ENCODE measurements at regions of chr2 and their contacts with region 1.

Region 1: GRCh38 chr2:28269019-28269784 is 123.5 kb upstream of the FOSL2 start:
- DNase-seq: peak; percentile 70
- H3K4me3 Mint-ChIP-seq: peak overlapping the region; percentile 60
- H3K27ac Mint-ChIP-seq: peak overlapping the region; percentile 90
- H3K4me1 Mint-ChIP-seq: peaks cover 45% of the 10 kb centered on the region
- H3K27me3 Mint-ChIP-seq: no peaks in the 10 kb centered on the region
- CTCF ChIP-seq: no peak

Region 2: DNA sequence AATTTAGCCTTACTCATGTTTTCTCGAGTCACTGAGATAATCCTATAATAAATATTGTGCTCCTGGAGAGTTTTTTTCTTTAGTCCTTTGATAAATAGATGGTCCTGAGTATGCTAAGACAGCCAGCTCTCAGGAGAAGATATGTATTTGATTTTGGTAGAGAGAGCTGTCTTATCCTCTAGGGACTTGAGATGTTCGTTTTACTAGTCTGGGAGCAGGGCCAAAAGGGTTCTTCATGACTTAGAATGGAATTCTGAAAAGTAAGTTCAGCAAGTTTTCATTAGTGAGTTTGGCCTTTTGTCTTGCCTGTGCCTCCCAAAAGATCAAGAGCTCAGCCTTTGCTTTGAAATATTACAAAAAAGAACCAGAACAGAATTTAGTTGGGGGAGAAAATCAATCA is 132.0 kb before region 1 on chr2:
- CTCF ChIA-PET with region 1: no interaction called
- POLR2A ChIA-PET with region 1: interaction called, 15 read pairs
- intact Hi-C with region 1: no loop called
- DNase-seq: peak; percentile 70
- H3K4me3 Mint-ChIP-seq: peak overlapping the region; percentile 16
- H3K27ac Mint-ChIP-seq: peak overlapping the region; percentile 57
- H3K4me1 Mint-ChIP-seq: peaks cover 46% of the 10 kb centered on the region
- H3K27me3 Mint-ChIP-seq: no peaks in the 10 kb centered on the region
- CTCF ChIP-seq: no peak

Region 3: GRCh38 chr2:28160986-28161425 is 108.2 kb before region 1 on chr2:
- CTCF ChIA-PET with region 1: interaction called, 5 read pairs
- POLR2A ChIA-PET with region 1: interaction called, 20 read pairs
- intact Hi-C with region 1: no loop called
- DNase-seq: peak; percentile 82
- H3K4me3 Mint-ChIP-seq: no peak overlapping the region
- H3K27ac Mint-ChIP-seq: peak overlapping the region; percentile 89
- H3K4me1 Mint-ChIP-seq: peaks cover 45% of the 10 kb centered on the region
- H3K27me3 Mint-ChIP-seq: no peaks in the 10 kb centered on the region
- CTCF ChIP-seq: no peak

Region 4: DNA sequence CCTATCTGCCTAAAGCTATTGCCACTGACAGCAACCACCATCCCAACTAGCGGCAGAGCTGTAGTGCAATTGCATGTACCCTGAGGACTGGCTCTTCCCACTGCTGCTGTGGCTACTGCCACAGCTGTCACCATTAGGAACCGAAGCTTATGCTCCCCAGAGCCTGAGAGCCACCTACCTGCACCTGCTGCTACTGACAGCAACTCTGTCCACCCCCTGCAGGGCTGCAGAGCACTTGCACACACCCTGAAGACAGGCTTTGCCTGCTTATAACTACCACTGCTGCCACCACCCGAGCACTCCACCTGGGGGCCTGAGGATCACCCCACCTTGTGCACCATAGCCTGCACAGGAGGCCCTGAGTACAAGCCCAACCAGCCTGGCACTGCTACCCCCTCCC is 94.2 kb before region 1 on chr2:
- CTCF ChIA-PET with region 1: no interaction called
- POLR2A ChIA-PET with region 1: interaction called, 23 read pairs
- intact Hi-C with region 1: no loop called
- DNase-seq: no peak
- H3K4me3 Mint-ChIP-seq: no peak overlapping the region
- H3K27ac Mint-ChIP-seq: no peak overlapping the region
- H3K4me1 Mint-ChIP-seq: peaks cover 17% of the 10 kb centered on the region
- H3K27me3 Mint-ChIP-seq: no peaks in the 10 kb centered on the region
- CTCF ChIP-seq: no peak

Region 5: DNA sequence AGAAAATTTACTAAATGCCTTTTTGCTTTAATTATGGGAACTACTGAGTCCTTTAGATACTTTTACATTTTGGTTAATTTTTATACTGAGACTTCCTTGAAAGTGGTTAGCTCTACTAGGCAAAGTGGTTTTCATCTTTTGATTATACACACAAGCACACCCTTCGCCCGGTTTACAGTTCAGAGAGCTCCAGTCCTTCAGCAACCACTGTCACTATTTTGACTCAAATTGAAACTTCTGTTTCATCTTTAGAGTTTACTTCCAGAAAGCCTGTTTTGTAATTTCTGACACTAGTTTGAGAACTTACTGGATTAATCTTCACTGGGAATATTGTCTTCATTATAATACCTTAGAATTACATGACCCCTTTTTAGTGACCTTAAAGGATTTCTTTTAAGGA is 16.9 kb before region 1 on chr2:
- CTCF ChIA-PET with region 1: interaction called, 7 read pairs
- POLR2A ChIA-PET with region 1: interaction called, 38 read pairs
- intact Hi-C with region 1: no loop called
- DNase-seq: no peak
- H3K4me3 Mint-ChIP-seq: no peak overlapping the region
- H3K27ac Mint-ChIP-seq: peak overlapping the region; percentile 39
- H3K4me1 Mint-ChIP-seq: peaks cover 7% of the 10 kb centered on the region
- H3K27me3 Mint-ChIP-seq: no peaks in the 10 kb centered on the region
- CTCF ChIP-seq: no peak

Region 6: DNA sequence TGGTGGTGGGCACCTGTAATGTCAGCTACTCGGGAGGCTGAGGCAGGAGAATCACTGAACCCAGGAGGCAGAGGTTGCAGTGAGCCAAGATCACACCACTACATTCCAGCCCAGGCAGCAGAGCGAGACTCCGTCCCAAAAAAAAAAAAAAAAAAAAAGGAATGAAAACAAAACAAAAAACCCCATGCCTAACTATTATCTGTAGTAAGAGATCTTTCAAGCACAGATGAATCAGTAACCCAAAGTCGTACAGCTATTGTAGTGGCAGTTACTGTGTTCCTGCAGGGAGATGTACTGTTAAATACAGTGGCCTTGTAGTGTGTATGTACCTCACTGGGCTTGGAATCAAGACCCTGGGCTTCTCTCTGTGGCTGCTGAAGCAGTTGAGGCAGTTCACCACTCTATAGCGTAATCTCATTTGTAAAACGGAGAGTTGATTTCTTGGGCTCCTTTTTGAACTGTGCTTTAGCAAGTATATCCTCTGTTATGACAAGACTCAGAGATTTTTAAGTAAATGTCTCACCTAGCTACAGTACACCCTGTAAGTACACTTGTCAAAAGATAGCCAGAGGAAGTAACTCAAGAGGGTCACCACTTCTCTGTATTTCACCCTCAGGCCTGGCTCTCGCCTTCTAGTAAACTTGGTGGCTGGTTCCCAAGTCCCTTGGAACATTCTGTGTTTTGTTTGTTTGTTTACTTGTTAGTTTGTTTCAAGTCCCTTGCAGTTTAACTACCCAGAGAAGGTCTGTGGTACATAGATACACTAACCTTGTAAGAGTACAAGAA is 13.9 kb after region 1 on chr2:
- CTCF ChIA-PET with region 1: interaction called, 3 read pairs
- POLR2A ChIA-PET with region 1: interaction called, 23 read pairs
- intact Hi-C with region 1: no loop called
- DNase-seq: no peak
- H3K4me3 Mint-ChIP-seq: no peak overlapping the region
- H3K27ac Mint-ChIP-seq: peak overlapping the region; percentile 61
- H3K4me1 Mint-ChIP-seq: peaks cover 13% of the 10 kb centered on the region
- H3K27me3 Mint-ChIP-seq: no peaks in the 10 kb centered on the region
- CTCF ChIP-seq: no peak

Region 7: DNA sequence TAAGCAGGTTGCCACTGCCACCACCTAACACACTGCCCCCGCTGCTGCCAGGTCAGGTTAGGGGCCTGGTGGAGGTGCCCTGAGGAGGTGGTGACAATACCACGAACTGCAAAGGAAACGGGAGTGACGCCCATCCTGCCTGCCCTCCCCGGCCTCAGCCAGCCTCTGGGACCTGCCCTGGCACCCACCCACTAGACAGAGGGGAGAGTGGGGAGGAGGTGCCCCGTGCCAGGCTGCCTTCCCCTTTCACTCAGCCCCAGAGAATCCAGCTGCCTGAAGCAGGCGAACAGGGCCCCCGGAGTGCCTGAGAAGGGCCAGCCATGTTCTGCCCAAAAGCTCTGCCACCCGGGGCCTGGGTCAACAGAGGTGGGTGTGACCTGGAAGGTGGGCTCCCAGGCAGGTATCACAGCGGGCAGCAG is 79.0 kb after region 1 on chr2:
- CTCF ChIA-PET with region 1: no interaction called
- POLR2A ChIA-PET with region 1: no interaction called
- intact Hi-C with region 1: no loop called
- DNase-seq: no peak
- H3K4me3 Mint-ChIP-seq: no peak overlapping the region
- H3K27ac Mint-ChIP-seq: no peak overlapping the region
- H3K4me1 Mint-ChIP-seq: no peaks in the 10 kb centered on the region
- H3K27me3 Mint-ChIP-seq: no peaks in the 10 kb centered on the region
- CTCF ChIP-seq: no peak

Region 8: GRCh38 chr2:28377984-28378678 is 108.9 kb after region 1 on chr2:
- CTCF ChIA-PET with region 1: interaction called, 4 read pairs
- POLR2A ChIA-PET with region 1: interaction called, 83 read pairs
- intact Hi-C with region 1: no loop called
- DNase-seq: peak; percentile 93
- H3K4me3 Mint-ChIP-seq: peak overlapping the region; percentile 61
- H3K27ac Mint-ChIP-seq: peak overlapping the region; percentile 70
- H3K4me1 Mint-ChIP-seq: peaks cover 29% of the 10 kb centered on the region
- H3K27me3 Mint-ChIP-seq: no peaks in the 10 kb centered on the region
- CTCF ChIP-seq: no peak

Measured in MCF 10A (cell line).